ENCODE measurements at regions of chr16 and their contacts with region 1.

Region 1: DNA sequence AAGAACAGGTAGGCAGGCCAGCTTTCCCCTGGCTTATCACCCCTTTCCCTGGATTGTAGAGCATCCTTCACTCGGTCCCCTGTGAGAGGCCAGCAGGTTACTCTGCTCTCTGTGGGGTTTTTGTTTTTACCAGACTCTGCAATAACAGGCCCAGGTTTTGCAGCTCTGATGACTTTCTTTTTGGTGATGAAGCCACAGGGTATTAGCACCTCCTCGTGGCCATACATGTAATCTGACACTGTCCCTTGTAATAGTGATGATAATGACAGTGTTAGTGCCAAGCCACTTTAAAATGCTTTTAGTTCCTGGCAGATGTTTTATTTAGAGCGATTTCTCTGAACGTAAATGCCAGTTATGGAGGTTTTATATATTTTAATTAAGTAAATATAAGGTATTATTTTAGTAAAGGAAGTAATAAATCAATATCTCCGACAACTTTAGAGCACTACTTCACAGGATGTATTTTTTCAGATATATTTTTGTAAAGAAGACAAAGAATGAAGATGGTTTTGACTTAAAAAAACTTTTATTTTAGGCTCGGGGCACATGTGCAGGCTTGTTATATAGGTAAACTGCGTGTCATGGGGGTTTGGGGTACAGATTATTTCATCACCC is 38.0 kb upstream of the CPHXL start:
- DNase-seq: peak in 4 of 5 donors; percentile 44 to 66 (median 48)
- H3K4me3 ChIP-seq: no peak overlapping the region
- H3K27ac ChIP-seq: no peak overlapping the region
- H3K4me1 ChIP-seq: no peaks in the 10 kb centered on the region
- H3K27me3 ChIP-seq: no peaks in the 10 kb centered on the region
- CTCF ChIP-seq: peak; percentile 74 to 75 (median 75)
- EP300 ChIP-seq: no peak
- POLR2A ChIP-seq: no peak

Region 2: DNA sequence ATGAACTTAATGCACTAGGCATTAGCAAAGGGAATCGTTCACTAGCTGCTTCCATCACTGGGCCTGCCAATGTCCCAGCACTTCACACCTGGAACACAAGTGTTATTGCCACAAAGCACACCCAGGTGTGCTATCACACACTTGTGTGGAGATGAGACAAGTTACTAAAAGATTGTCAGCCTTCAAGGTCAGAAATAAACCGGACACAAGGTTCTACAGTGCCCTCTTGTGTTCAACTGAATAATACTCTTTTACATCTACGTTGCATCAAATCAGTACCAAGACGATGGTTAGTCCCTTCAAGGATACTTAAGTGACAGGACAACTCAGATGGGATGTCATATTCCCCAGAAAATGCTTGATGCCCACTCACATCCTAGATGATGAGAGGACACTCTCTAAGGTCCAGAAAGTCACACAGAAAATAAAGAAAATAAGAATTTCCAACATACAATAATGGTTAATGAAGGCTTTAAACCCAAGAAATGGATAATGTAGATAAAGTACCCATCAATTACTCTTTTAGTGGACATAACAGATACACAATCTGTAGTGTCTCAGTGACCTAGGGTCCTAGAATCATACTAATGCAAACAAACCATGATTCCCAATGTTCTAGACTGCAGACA is 1140.9 kb before region 1 on chr16:
- intact Hi-C with region 1: no loop called
- DNase-seq: no peak
- H3K4me3 ChIP-seq: no peak overlapping the region
- H3K27ac ChIP-seq: no peak overlapping the region
- H3K4me1 ChIP-seq: peaks cover 7% of the 10 kb centered on the region
- H3K27me3 ChIP-seq: no peaks in the 10 kb centered on the region
- CTCF ChIP-seq: peak in 2 of 3 donors; percentile 21 to 33
- EP300 ChIP-seq: no peak
- POLR2A ChIP-seq: no peak

Region 3: DNA sequence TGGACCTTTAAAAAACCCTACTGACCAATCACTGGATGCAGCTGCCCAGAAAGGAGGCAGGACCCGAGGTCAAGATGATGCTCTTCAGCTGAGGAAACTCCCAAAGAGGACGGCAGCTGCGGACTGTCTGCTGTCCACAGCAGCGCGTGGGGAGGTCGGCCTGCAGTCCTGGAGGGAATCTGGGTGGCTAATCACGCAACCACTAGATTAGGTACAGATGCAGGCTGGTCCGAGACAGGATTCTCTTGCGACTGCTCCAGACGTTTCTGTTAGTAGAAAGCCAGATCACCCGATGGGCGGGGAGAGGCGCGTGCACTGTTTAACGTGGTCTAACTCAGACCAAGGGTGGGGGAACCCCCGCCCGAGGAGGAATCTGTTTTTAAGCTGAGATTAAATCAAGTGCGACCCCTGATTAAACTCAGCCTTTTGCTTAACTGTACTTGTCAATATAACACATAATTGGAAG is 566.1 kb before region 1 on chr16:
- intact Hi-C with region 1: loop called in 1 of 4 experiments (anchors 10 kb)
- DNase-seq: peak in 2 of 5 donors; percentile 2 to 33
- H3K4me3 ChIP-seq: no peak overlapping the region
- H3K27ac ChIP-seq: no peak overlapping the region
- H3K4me1 ChIP-seq: peaks cover 1% of the 10 kb centered on the region
- H3K27me3 ChIP-seq: no peaks in the 10 kb centered on the region
- CTCF ChIP-seq: no peak
- EP300 ChIP-seq: no peak
- POLR2A ChIP-seq: no peak

Region 4: GRCh38 chr16:75471723-75472633 is 292.3 kb before region 1 on chr16:
- intact Hi-C with region 1: loop called (anchors 5 to 10 kb)
- DNase-seq: peak; percentile 32 to 65 (median 49)
- H3K4me3 ChIP-seq: no peak overlapping the region
- H3K27ac ChIP-seq: no peak overlapping the region
- H3K4me1 ChIP-seq: no peaks in the 10 kb centered on the region
- H3K27me3 ChIP-seq: no peaks in the 10 kb centered on the region
- CTCF ChIP-seq: peak; percentile 36 to 49 (median 39)
- EP300 ChIP-seq: no peak
- POLR2A ChIP-seq: no peak

Region 5: DNA sequence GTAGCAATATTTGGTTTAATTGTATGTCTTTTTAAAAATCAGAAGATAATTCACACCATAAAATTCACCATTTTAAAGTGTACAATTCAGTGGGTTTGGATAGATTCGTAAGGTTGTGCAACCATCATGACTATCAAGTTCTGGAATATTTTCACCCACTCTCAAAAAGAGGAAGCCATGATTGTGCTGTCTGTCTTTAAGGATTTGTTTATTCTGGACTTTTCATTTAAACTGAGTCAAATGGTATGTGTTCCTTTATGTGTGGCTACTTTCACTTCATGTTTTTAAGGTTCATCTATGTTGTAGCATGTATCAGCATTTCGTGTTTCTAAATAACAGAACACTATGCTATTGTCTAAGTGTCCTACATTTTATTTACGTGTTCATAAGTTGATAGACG is 30.2 kb after region 1 on chr16:
- intact Hi-C with region 1: no loop called
- DNase-seq: no peak
- H3K4me3 ChIP-seq: no peak overlapping the region
- H3K27ac ChIP-seq: no peak overlapping the region
- H3K4me1 ChIP-seq: no peaks in the 10 kb centered on the region
- H3K27me3 ChIP-seq: no peaks in the 10 kb centered on the region
- CTCF ChIP-seq: no peak
- EP300 ChIP-seq: no peak
- POLR2A ChIP-seq: no peak